Activated B cell treated with CpG ODN at 0.5 μM for 24 hours (primary cell): ENCODE measurements at regions of chr2 and their contacts with region 1.

Region 1: GRCh38 chr2:64609227-64609941 is 44.3 kb downstream of the SERTAD2 start:
- DNase-seq: peak; percentile 82
- ATAC-seq: peak; percentile 71
- H3K4me3 Mint-ChIP-seq: peak overlapping the region; percentile 84
- H3K27ac Mint-ChIP-seq: peak overlapping the region; percentile 77
- H3K4me1 Mint-ChIP-seq: peaks cover 34% of the 10 kb centered on the region
- H3K27me3 Mint-ChIP-seq: no peaks in the 10 kb centered on the region
- CTCF ChIP-seq: no peak

Region 2: GRCh38 chr2:63790913-63791312 is 818.5 kb before region 1 on chr2:
- CTCF ChIA-PET with region 1: no interaction called
- POLR2A ChIA-PET with region 1: no interaction called
- intact Hi-C with region 1: no loop called
- DNase-seq: no peak
- ATAC-seq: no peak
- H3K4me3 Mint-ChIP-seq: no peak overlapping the region
- H3K27ac Mint-ChIP-seq: no peak overlapping the region
- H3K4me1 Mint-ChIP-seq: no peaks in the 10 kb centered on the region
- H3K27me3 Mint-ChIP-seq: no peaks in the 10 kb centered on the region
- CTCF ChIP-seq: no peak

Region 3: DNA sequence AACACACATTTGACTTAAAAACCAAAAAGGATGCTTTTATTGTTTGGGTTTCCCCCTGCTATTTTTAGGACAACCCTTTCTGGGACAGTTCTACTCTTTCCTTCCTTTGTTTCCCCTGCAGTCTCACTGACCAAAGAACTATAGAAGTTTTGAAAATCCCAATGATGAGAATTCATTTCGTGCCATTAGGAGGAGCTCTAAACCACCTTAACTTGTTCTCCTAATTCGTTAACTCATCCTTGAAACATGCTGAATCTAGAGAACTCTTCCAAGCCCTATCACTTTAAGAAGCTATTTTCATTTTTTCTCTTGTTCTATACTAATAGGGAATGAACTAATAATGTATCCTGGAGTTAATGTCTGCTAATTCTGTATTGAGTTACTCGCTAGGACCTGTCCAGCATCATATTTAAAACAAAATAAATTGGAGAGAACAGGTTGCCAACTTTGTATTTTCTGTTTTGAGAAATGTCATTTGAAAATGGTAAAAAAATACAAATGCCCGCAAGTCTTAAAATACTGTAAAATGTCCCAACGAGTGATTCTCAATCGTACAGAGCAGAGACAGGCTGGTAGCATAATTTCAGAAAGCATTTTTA is 22.4 kb before region 1 on chr2:
- CTCF ChIA-PET with region 1: interaction called, 21 read pairs
- POLR2A ChIA-PET with region 1: interaction called, 4 read pairs
- intact Hi-C with region 1: loop called (anchors 2 kb)
- DNase-seq: no peak
- ATAC-seq: peak; percentile 62
- H3K4me3 Mint-ChIP-seq: no peak overlapping the region
- H3K27ac Mint-ChIP-seq: peak overlapping the region; percentile 50
- H3K4me1 Mint-ChIP-seq: peaks cover 17% of the 10 kb centered on the region
- H3K27me3 Mint-ChIP-seq: no peaks in the 10 kb centered on the region
- CTCF ChIP-seq: peak; percentile 77

Region 4: GRCh38 chr2:64626963-64627760 is 17.8 kb after region 1 on chr2:
- CTCF ChIA-PET with region 1: no interaction called
- POLR2A ChIA-PET with region 1: interaction called, 30 read pairs
- intact Hi-C with region 1: no loop called
- DNase-seq: no peak
- ATAC-seq: no peak
- H3K4me3 Mint-ChIP-seq: no peak overlapping the region
- H3K27ac Mint-ChIP-seq: no peak overlapping the region
- H3K4me1 Mint-ChIP-seq: peaks cover 14% of the 10 kb centered on the region
- H3K27me3 Mint-ChIP-seq: no peaks in the 10 kb centered on the region
- CTCF ChIP-seq: no peak

Region 5: GRCh38 chr2:64635976-64636911 is 26.9 kb after region 1 on chr2:
- CTCF ChIA-PET with region 1: interaction called, 6 read pairs
- POLR2A ChIA-PET with region 1: interaction called, 12 read pairs
- intact Hi-C with region 1: no loop called
- DNase-seq: no peak
- ATAC-seq: peak; percentile 48
- H3K4me3 Mint-ChIP-seq: peak overlapping the region; percentile 68
- H3K27ac Mint-ChIP-seq: peak overlapping the region; percentile 94
- H3K4me1 Mint-ChIP-seq: peaks cover 71% of the 10 kb centered on the region
- H3K27me3 Mint-ChIP-seq: no peaks in the 10 kb centered on the region
- CTCF ChIP-seq: no peak

Region 6: DNA sequence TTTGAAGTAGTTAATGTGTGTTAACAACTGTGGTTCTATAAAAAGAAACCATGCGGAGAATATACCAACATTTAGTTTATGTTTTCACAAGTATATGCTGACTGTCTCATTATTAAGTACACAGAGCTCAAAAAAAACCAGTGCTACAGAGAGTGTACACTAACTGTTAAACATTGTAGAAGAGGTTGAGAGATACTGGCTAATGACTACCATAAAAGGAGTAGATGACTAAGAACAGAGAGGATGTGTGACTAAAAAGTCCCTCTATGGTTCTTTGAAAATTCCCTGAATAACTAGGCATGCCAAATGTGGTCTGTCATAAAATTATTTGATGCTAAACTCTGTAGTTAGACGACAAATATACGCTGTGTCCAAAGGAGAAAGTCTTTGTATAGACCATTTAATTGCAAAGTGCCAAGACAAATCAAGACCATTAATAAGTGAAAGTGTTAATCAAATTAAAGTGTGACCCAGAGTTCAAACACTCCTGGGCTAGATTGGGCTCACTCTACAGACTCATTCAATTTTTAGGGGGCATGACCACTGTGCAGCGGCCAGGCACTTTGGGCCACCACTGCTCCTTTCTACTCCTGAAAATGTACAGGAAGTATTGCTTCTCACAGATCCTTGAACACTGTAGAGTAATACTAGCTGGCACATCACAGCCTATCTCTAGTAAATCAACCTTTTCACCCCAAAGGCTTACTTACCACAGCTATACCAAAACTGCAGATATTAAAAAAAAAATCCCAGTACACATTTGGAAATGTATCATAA is 89.5 kb after region 1 on chr2:
- CTCF ChIA-PET with region 1: no interaction called
- POLR2A ChIA-PET with region 1: no interaction called
- intact Hi-C with region 1: loop called (anchors 2 kb)
- DNase-seq: no peak
- ATAC-seq: peak; percentile 86
- H3K4me3 Mint-ChIP-seq: peak overlapping the region; percentile 52
- H3K27ac Mint-ChIP-seq: peak overlapping the region; percentile 89
- H3K4me1 Mint-ChIP-seq: peaks cover 51% of the 10 kb centered on the region
- H3K27me3 Mint-ChIP-seq: no peaks in the 10 kb centered on the region
- CTCF ChIP-seq: no peak

Region 7: DNA sequence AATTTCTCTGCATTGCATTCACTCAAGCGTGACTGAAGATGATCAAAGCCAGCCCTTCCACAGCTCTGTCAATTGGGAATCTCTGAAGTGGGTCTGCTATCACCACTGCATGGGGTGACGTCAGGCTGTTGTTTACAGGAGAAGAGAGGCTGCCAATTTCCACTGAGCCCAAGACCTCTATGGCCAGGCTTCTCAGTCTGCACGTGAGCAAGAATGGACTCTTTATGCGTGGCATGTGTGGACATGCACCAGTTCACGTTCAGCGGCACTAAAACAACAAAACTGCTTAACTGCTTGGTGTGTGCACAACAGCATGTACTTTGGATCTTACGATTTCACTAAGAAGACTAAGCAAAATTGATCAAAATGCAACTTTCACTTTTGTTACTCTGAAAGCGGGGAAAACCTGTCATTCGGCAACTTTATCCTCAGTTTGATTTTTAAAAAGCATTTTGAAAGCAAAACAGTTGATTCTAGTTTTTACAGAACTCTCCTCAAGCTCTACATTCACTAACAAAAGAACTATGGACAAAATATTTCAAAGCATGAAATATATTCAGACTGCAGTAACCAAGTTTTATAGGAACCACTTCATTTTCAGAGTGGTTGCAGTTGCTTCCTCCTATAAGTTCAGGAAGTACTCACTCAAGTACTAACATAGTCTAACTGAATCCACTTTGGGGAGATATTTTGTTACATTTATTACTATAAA is 121.3 kb after region 1 on chr2:
- CTCF ChIA-PET with region 1: interaction called, 4 read pairs
- POLR2A ChIA-PET with region 1: interaction called, 5 read pairs
- intact Hi-C with region 1: loop called (anchors 2 kb)
- DNase-seq: peak; percentile 24
- ATAC-seq: peak; percentile 45
- H3K4me3 Mint-ChIP-seq: peak overlapping the region; percentile 84
- H3K27ac Mint-ChIP-seq: peak overlapping the region; percentile 91
- H3K4me1 Mint-ChIP-seq: peaks cover 66% of the 10 kb centered on the region
- H3K27me3 Mint-ChIP-seq: no peaks in the 10 kb centered on the region
- CTCF ChIP-seq: no peak

Region 8: DNA sequence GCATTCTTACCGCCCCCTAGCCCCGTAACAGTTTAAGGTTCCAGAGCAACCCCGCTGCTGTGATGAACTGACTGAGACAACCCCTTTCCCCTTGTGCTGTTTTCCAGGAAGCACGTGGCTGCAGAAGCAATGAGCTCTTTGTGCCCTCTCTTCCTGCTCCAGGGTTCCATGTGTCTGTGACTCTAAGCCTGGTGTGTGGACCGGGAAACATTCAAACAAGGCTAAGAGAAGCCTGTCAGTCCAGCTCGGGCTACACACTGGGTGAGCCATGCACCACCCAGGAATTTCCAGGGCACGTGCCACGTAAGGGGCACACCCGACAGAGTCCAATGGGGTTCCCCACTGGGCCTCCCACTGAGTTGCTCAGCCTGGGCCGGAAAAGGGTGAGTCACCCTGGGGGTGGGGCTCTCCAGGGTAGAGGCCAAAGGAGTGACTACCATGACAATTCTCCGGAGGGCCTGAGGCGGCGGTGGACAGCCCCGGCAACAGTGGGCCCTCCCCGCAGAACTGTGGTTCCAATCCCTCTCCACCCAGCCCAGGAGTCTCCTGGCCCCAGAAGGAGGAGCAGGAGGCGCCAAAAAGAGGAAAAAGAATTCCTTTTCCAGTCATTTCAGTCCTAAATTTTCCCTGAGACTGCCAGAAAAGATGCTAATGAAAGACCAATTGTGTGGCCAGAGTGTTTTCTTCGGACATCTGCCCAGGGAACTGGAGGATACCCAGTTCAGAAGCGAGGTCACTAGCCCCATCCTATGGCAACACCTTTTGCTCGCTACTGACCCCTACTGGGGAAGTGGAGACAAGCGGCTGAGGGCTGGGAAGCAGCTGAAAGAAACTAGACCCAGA is 222.0 kb after region 1 on chr2:
- CTCF ChIA-PET with region 1: no interaction called
- POLR2A ChIA-PET with region 1: interaction called, 4 read pairs
- intact Hi-C with region 1: loop called (anchors 1 kb)
- DNase-seq: peak; percentile 75
- ATAC-seq: peak; percentile 96
- H3K4me3 Mint-ChIP-seq: peak overlapping the region; percentile 63
- H3K27ac Mint-ChIP-seq: peak overlapping the region; percentile 82
- H3K4me1 Mint-ChIP-seq: peaks cover 21% of the 10 kb centered on the region
- H3K27me3 Mint-ChIP-seq: no peaks in the 10 kb centered on the region
- CTCF ChIP-seq: no peak